ENCODE measurements at regions of chr15 and their contacts with region 1.

Region 1: DNA sequence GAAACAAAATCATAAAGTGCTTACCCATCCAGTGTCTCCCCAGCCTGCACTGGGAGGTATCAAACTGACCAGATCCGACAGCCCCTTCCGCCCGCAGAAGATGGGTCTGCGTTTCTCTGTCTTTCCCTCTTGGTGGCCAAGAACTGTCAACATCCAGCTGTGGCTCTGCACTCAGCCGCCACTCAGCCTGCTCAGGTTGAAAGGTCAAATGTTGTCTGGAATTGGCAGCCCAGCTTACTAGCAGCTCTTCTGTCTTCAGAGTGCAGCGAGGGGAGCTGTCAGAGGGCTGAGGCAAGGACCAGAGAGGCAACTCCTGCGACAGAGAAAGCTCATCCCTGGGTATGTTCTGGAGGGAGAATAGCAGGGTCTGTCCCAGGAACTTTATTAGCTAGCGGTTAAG is 45.4 kb downstream of the GOLGA6L2 start:
- DNase-seq: no peak
- H3K4me3 ChIP-seq: no peak overlapping the region
- CTCF ChIP-seq: no peak
- POLR2A ChIP-seq: no peak

Region 2: DNA sequence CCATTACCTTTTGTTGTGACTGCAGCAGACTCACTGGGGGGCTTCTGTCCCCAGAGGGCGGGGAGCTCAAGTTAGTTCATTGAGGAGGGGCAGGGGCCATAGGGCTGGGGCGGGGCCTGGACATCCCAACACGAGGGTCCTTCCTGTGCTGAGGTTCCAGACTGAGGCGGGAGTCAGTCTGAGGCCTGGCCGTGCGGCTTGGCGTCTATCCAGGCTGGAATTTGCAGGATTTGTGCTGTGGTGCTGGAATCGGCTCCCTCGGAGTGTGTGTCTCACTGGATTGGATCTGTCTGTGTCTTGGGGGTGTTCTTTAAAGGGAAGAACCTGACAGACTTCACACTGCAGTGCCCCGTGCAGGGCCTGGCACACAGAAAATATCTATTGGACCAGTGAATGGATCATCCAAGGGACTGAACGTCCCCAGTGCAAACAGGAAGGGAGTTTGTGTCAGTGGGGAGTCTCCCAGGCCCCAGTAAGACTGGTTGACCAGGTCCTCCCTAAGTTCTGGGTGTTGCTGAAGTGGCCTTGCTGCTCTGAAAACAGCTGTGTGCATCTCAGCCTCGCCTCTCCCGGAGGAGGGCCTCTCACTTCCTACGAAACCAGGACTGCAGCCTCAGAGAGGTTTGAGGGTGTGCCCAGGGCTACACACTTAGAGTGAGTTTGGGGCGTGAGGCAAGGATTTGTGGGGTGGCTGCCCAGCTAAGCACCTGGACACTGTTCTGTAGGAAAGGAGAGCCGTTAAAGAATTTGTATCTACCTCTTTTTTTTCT is 19.4 kb after region 1 on chr15:
- intact Hi-C with region 1: loop called (anchors 1 kb)
- DNase-seq: no peak
- H3K4me3 ChIP-seq: no peak overlapping the region
- CTCF ChIP-seq: no peak
- POLR2A ChIP-seq: no peak

Region 3: GRCh38 chr15:23823508-23823907 is 421.9 kb after region 1 on chr15:
- intact Hi-C with region 1: no loop called
- DNase-seq: no peak
- H3K4me3 ChIP-seq: no peak overlapping the region
- CTCF ChIP-seq: no peak
- POLR2A ChIP-seq: no peak

Region 4: DNA sequence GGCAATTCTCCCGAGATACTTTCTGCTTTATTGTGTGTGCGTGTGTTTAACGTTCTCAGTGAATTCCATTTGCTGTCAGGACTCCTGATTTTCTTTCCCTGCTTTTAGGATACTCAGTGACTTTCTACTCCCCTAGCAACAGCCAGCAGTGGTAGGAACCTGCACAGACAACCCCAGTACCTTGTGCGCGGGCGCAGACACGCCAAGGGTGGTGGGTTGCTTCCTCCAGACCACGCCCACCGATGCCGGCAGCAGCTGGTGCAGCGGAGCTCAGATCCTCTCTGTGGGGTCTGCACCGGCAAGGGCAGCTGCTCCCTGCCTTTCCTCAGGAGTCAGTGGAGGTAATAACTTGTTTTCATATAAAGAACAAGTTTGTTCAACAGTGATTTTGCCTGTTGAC is 510.6 kb after region 1 on chr15:
- intact Hi-C with region 1: no loop called
- DNase-seq: no peak
- H3K4me3 ChIP-seq: no peak overlapping the region
- CTCF ChIP-seq: no peak
- POLR2A ChIP-seq: no peak